Dendritic cell treated with granulocyte-macrophage colony-stimulating factor and Interleukin-4, amounts not matched to agents 40 ng/mL and 50 ng/mL, for 4 days (primary cell): ENCODE measurements at regions of chr6 and their contacts with region 1.

Region 1: DNA sequence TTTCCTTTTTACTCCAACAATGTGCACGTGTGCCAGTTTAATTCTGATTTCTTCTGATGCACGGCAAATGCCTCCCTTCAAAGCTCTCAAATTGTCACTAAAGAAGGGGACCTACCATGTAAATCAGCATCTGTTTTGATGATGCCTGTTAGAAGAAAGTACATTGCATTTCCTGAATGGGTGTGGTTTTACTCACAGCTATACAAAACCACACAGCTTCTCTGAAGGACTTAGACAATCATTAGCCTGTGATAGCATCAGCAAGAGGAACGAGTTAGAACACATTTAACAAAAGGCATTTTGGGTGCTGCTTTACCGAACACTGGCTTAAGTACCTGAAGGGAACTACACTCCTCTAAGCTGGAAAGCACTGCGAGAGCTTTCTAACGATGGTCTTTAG is 109.4 kb downstream of the ATXN1 start:
- H3K4me3 Mint-ChIP-seq: no peak overlapping the region
- H3K27ac Mint-ChIP-seq: no peak overlapping the region
- H3K4me1 Mint-ChIP-seq: peaks cover 47% of the 10 kb centered on the region
- H3K27me3 Mint-ChIP-seq: no peaks in the 10 kb centered on the region

Region 2: GRCh38 chr6:16585805-16586204 is 66.1 kb before region 1 on chr6:
- intact Hi-C with region 1: loop called (anchors 10 kb)
- H3K4me3 Mint-ChIP-seq: peak overlapping the region; percentile 62
- H3K27ac Mint-ChIP-seq: peak overlapping the region; percentile 71
- H3K4me1 Mint-ChIP-seq: peaks cover 41% of the 10 kb centered on the region
- H3K27me3 Mint-ChIP-seq: no peaks in the 10 kb centered on the region

Region 3: DNA sequence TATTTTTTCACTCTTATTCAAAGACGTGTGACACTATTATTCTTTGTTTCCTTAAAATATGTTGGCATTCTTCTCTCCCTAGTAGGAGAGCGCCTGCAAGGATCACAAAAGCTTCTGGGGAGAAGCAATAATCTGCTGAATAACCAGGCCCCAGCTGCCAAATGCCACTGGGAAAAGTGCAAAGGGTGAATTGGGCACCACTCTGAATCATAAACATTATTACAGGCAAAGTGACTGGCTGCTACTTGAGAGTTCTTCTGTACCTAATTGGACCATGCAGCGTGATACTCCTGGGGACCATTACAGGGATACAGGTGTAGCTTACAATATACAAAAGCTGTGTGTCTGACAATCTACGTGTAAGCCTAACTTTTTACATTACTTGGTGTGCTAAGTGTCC is 43.4 kb before region 1 on chr6:
- intact Hi-C with region 1: no loop called
- H3K4me3 Mint-ChIP-seq: no peak overlapping the region
- H3K27ac Mint-ChIP-seq: no peak overlapping the region
- H3K4me1 Mint-ChIP-seq: no peaks in the 10 kb centered on the region
- H3K27me3 Mint-ChIP-seq: no peaks in the 10 kb centered on the region

Region 4: DNA sequence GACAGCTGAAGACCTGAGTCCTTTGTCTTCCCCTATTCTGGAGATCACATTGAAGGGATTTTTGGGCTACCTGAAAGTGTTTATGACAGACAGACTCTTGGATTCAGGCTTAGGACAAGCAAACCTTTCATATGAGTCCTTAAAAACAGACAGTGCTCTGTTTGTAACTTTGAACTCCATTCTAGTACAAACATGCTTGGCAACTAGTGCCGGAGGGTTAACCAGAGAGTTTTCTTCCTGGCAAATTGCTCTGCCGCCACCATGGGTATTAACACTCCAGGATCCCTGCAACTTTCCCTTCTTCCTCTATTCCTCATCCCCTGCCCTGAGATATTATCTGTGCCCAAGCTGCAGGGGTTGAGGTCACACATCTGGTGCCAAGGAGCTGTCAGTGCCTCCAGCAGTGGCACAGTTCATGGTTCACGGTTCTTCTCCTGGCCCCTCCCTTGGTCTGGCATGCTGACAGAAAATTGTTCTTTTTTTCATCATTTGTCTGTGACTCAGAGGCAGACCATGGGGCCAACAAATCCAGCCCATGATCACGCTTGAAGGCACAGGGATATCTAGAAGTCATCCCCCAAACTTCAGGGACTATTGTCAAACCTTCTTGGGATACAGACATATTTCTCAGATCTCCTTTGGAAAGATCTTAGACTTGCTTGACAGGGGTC is 31.8 kb after region 1 on chr6:
- intact Hi-C with region 1: no loop called
- H3K4me3 Mint-ChIP-seq: no peak overlapping the region
- H3K27ac Mint-ChIP-seq: peak overlapping the region; percentile 72
- H3K4me1 Mint-ChIP-seq: peaks cover 69% of the 10 kb centered on the region
- H3K27me3 Mint-ChIP-seq: no peaks in the 10 kb centered on the region

Region 5: GRCh38 chr6:16704401-16705045 is 52.7 kb after region 1 on chr6:
- intact Hi-C with region 1: no loop called
- H3K4me3 Mint-ChIP-seq: peak overlapping the region; percentile 61
- H3K27ac Mint-ChIP-seq: peak overlapping the region; percentile 95
- H3K4me1 Mint-ChIP-seq: peaks cover 81% of the 10 kb centered on the region
- H3K27me3 Mint-ChIP-seq: no peaks in the 10 kb centered on the region

Region 6: GRCh38 chr6:16749516-16750485 is 97.9 kb after region 1 on chr6:
- intact Hi-C with region 1: loop called (anchors 1 kb)
- H3K4me3 Mint-ChIP-seq: peak overlapping the region; percentile 13
- H3K27ac Mint-ChIP-seq: peak overlapping the region; percentile 45
- H3K4me1 Mint-ChIP-seq: peaks cover 92% of the 10 kb centered on the region
- H3K27me3 Mint-ChIP-seq: no peaks in the 10 kb centered on the region